ENCODE measurements at regions of chr10 and their contacts with region 1.

Region 1: DNA sequence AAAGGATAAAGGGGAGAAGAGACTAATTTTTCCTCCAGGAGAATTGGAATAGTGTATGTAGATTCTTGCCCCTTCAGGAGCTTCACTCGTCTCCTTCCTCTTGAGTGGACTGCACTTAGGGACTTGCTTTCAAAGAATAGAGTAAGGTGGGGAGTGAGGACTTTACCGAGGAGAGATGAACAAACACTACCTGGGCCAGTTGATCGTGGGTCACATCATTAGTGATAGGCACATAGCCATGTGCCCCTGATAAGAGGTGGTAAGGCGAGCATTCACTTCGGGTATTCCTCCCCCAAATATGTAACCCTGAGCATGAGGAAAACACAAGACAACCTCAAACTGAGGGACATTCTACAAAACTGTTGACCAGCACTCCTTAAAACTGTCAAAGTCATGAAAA is 14.6 kb upstream of the KIFBP start:
- DNase-seq: no peak
- ATAC-seq: no peak
- H3K4me3 ChIP-seq: no peak overlapping the region
- H3K4me1 ChIP-seq: no peaks in the 10 kb centered on the region
- CTCF ChIP-seq: no peak

Region 2: DNA sequence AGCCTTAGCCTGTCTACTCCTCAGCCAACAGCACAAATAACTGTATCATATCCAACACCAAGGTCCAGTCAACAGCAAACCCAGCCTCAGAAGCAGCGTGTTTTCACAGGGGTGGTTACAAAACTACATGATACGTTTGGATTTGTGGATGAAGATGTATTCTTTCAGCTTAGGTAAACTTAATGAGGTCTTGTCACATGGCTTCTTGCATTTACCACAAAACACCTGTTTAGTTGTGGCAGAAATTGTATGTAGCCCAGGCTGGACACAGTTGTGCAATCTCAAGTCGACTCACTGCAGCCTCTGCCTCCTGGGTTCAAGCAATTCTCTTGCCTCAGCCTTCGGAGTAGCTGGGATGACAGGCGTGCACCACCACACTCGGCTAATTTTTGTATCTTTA is 231.6 kb before region 1 on chr10:
- intact Hi-C with region 1: loop called in 1 of 2 experiments (anchors 10 kb)
- DNase-seq: no peak
- ATAC-seq: no peak
- H3K4me3 ChIP-seq: no peak overlapping the region
- H3K4me1 ChIP-seq: no peaks in the 10 kb centered on the region
- CTCF ChIP-seq: no peak

Region 3: DNA sequence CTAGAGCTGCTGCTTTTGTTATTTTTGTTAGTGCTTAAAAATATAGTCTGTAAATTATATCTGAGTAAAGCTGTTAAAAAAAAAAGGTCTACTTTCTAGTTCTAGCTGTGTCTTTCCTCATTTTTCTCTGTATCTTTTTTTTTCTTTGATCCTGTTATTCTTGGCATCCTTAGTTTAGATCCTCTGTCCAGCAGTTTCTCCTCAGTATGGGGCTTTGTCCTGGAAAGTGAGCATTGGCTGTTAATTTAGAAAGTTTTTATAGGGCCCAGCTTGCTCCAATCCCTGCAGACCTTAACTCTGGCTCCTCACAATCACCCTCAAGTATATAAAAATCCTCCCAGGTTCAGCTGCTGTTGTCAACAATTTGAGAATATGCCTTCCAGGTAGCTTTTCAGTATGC is 49.4 kb before region 1 on chr10:
- intact Hi-C with region 1: loop called in 1 of 2 experiments (anchors 10 kb)
- DNase-seq: no peak
- ATAC-seq: no peak
- H3K4me3 ChIP-seq: no peak overlapping the region
- H3K4me1 ChIP-seq: no peaks in the 10 kb centered on the region
- CTCF ChIP-seq: no peak